CD8-positive, alpha-beta T cell (primary cell): ENCODE measurements at regions of chr1 and their contacts with region 1.

Region 1: DNA sequence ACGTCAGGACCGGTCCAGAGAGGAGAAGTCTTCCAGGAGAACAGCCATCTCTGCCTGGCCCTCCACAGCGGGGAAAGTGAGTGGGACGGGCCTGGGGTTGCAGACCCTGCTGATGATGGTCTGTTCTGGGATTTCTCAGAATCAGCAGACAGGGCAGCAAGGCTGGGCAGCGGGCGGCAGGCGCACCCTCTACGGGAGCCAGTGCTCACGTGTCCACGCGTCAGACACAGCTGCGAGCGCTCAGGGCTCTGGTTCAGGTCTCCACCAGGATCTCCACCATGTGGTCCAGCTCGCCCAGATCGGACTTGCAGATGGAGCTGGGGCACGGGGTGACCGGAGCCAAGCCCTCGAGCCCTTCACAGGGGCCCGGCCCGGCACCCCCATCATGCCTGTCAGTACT is 5.5 kb downstream of the CLCA4 start:
- DNase-seq: peak in 1 of 9 experiments; percentile 1
- ATAC-seq: no peak
- H3K4me3 ChIP-seq: no peak overlapping the region
- H3K4me3 Mint-ChIP-seq: no peak overlapping the region
- H3K27ac ChIP-seq: no peak overlapping the region
- H3K27ac Mint-ChIP-seq: no peak overlapping the region
- H3K4me1 ChIP-seq: no peaks in the 10 kb centered on the region
- H3K4me1 Mint-ChIP-seq: no peaks in the 10 kb centered on the region
- H3K27me3 ChIP-seq: no peaks in the 10 kb centered on the region
- H3K27me3 Mint-ChIP-seq: peaks cover 3% of the 10 kb centered on the region
- CTCF ChIP-seq: no peak

Region 2: GRCh38 chr1:85818371-85818770 is 734.0 kb before region 1 on chr1:
- CTCF ChIA-PET with region 1: no interaction called
- POLR2A ChIA-PET with region 1: no interaction called
- intact Hi-C with region 1: loop called in 1 of 2 experiments (anchors 10 kb)
- DNase-seq: no peak
- ATAC-seq: no peak
- H3K4me3 ChIP-seq: no peak overlapping the region
- H3K4me3 Mint-ChIP-seq: no peak overlapping the region
- H3K27ac ChIP-seq: no peak overlapping the region
- H3K27ac Mint-ChIP-seq: no peak overlapping the region
- H3K4me1 ChIP-seq: no peaks in the 10 kb centered on the region
- H3K4me1 Mint-ChIP-seq: no peaks in the 10 kb centered on the region
- H3K27me3 ChIP-seq: no peaks in the 10 kb centered on the region
- H3K27me3 Mint-ChIP-seq: no peaks in the 10 kb centered on the region
- CTCF ChIP-seq: no peak